ENCODE measurements at regions of chr1 and their contacts with region 1.

Region 1: GRCh38 chr1:172456344-172456769 is 12.5 kb upstream of the PIGC start:
- DNase-seq: no peak
- H3K4me3 ChIP-seq: no peak overlapping the region
- CTCF ChIP-seq: no peak

Region 2: GRCh38 chr1:172443626-172444453 is 12.5 kb before region 1 on chr1 and contains the start of gene PIGC:
- CTCF ChIA-PET with region 1: interaction called, 19 read pairs
- POLR2A ChIA-PET with region 1: no interaction called
- DNase-seq: no peak
- H3K4me3 ChIP-seq: peak within 1 kb of the TSS; percentile 89
- CTCF ChIP-seq: peak; percentile 98

Measured in AG04449 (cell line).